CD4-positive, alpha-beta memory T cell (primary cell): ENCODE measurements at regions of chr18 and their contacts with region 1.

Region 1: DNA sequence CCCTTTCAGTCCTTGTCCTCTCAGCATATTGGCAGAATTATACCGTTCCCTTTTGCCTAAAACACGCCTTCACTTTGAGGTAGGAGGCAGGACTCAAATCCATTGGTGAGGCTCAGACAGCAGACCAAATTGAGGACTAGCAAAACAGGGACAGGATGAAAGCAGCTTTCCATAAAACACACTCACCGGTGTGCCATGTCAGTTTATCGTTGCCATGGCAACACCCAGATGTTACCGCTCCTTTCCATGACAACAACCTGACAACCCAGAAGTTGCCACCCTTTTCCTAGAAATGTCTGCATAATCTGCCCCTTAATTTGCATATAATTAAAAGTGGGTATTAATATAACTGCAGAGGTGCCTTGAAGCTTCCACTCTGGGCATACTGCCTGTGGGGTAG is 730.4 kb downstream of the METTL4 start:
- DNase-seq: no peak
- H3K4me3 ChIP-seq: no peak overlapping the region
- H3K4me3 Mint-ChIP-seq: no peak overlapping the region
- H3K27ac ChIP-seq: no peak overlapping the region
- H3K27ac Mint-ChIP-seq: no peak overlapping the region
- H3K4me1 ChIP-seq: no peaks in the 10 kb centered on the region
- H3K4me1 Mint-ChIP-seq: no peaks in the 10 kb centered on the region
- H3K27me3 ChIP-seq: no peaks in the 10 kb centered on the region
- H3K27me3 Mint-ChIP-seq: no peaks in the 10 kb centered on the region

Region 2: DNA sequence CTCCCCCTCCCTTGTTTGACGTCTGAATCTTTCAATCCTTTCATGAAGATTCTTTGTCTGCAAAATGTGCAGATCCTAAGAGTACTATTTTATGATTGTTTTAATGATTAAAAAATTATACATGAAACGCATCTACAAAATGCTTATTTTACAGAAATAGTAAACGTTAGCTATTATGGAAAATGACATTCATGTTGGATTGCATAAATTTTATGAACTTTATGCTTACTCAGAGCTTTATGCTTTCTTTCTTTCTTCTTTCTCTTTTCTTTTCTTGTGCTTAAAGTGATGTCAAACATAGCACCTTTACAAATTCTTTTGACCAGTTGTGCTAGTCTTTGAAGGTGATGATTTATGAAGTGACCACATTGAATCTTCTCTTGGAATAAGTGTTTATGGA is 130.8 kb before region 1 on chr18:
- CTCF ChIA-PET with region 1: no interaction called
- POLR2A ChIA-PET with region 1: no interaction called
- intact Hi-C with region 1: loop called (anchors 5 kb)
- DNase-seq: no peak
- H3K4me3 ChIP-seq: no peak overlapping the region
- H3K4me3 Mint-ChIP-seq: no peak overlapping the region
- H3K27ac ChIP-seq: no peak overlapping the region
- H3K27ac Mint-ChIP-seq: no peak overlapping the region
- H3K4me1 ChIP-seq: no peaks in the 10 kb centered on the region
- H3K4me1 Mint-ChIP-seq: no peaks in the 10 kb centered on the region
- H3K27me3 ChIP-seq: no peaks in the 10 kb centered on the region
- H3K27me3 Mint-ChIP-seq: no peaks in the 10 kb centered on the region